ENCODE measurements at regions of chr19 and their contacts with region 1.

Region 1: DNA sequence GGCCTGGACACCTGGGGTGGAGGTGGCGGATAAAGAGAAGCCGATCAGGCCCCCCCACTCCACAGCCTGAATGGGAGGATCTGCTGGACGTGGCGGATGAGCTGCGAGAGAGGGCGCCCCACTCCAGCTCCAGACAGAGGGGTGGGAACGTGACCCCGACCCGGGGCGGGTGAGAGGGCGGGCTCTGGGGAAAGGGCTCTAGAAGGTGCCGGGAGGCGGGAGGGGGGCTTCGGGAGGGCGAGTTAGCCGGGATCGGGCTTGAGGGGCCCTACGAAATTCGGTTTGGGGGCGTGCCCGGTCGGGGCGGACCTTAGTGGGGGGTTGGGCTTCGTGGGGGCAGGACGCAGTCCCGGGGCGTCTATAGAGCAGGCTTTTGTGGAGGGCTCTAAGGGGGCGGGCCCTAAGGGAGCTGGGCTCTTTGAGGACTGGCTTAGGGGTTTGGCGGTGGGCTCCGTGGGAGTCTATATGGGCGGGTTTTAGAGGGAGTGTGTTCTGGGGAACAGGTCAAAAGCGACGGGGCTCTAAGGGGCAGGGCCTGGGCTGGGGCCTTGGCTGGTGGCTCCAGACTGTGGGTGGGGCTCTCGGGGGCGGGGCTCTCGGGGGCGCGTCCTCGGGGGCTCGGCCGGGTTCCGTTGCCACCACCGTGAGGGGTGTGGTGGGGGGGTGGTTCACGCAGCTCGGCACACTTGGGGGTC is 4.1 kb upstream of the NANOS3 start:
- ATAC-seq: peak; percentile 25 to 87 (median 56)
- H3K4me3 ChIP-seq: peak overlapping the region in 1 of 5 donors; percentile 6
- H3K27ac ChIP-seq: no peak overlapping the region
- H3K4me1 ChIP-seq: peaks cover 0 to 3% of the 10 kb centered on the region in 2 donors

Region 2: GRCh38 chr19:14073261-14073924 is 200.6 kb after region 1 on chr19:
- in situ Hi-C with region 1: loop called in 8 of 9 experiments (anchors 10 to 25 kb)
- ATAC-seq: peak; percentile 68 to 77 (median 72)
- H3K4me3 ChIP-seq: peak overlapping the region; percentile 43 to 83 (median 76)
- H3K27ac ChIP-seq: peak overlapping the region in 1 of 2 donors; percentile 3
- H3K4me1 ChIP-seq: peaks cover 7 to 16% of the 10 kb centered on the region in 2 donors

Region 3: DNA sequence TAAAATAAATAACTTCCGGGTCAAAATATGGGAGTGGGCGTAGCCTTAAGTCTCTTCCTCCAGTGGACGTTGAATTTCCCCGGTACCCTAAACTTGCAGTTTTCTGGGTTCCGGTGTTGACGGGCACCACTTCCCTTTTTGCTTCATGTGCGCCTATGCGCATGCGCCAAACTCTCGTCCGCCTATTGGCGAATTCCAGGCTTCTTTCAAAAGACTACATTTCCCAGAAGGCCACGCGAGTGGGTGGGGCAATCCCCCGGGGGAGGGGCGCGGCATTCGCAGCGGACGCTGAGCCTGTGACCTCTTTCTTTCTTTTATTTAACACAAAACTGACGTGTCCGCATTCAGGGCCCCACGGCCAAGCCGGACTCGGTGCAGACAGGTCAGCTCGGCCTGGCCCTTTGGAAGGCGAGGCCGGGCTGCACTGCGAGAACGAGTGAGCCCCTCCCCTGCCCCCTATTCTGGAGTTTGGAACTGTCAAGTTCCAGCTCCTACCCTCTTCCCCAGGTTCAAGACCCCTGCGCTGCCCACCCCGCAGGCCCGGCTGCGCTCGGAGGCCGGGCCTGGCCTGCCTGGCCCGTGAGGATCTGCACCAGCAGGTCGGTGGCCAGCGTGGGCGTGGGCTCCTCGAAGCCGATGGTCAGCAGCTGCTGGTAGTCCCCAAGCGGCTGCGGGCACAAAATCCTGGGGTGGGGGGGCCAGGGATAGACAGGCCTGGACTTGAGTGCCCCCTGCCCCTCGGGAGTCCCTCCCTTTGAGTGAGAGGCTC is 208.7 kb after region 1 on chr19:
- in situ Hi-C with region 1: loop called in 3 of 9 experiments (anchors 10 kb)
- ATAC-seq: peak; percentile 91 to 97 (median 92)
- H3K4me3 ChIP-seq: peak overlapping the region; percentile 49 to 76 (median 64)
- H3K27ac ChIP-seq: peak overlapping the region; percentile 42 to 93
- H3K4me1 ChIP-seq: peaks cover 7 to 8% of the 10 kb centered on the region in 2 donors